Gastrocnemius medialis (tissue), 4 donors: ENCODE measurements at regions of chr1 and their contacts with region 1.

Region 1: GRCh38 chr1:182604169-182605164 is at the start of gene RGS16:
- DNase-seq: peak; percentile 86 to 90
- ATAC-seq: peak; percentile 85 to 86
- H3K4me3 ChIP-seq: peak within 1 kb of the TSS; percentile 52 to 68 (median 54)
- H3K27ac ChIP-seq: peak within 1 kb of the TSS; percentile 59 to 66 (median 63)
- H3K4me1 ChIP-seq: peaks cover 33 to 36% of the 10 kb centered on the region in 2 donors
- H3K27me3 ChIP-seq: no peaks in the 10 kb centered on the region
- CTCF ChIP-seq: no peak
- POLR2A ChIP-seq: peak; percentile 70 to 92
- total RNA-seq, gene RGS16: 0.41 to 0.98 (median 0.52) TPM in 3 of 4 donors, not detected in the other

Region 2: DNA sequence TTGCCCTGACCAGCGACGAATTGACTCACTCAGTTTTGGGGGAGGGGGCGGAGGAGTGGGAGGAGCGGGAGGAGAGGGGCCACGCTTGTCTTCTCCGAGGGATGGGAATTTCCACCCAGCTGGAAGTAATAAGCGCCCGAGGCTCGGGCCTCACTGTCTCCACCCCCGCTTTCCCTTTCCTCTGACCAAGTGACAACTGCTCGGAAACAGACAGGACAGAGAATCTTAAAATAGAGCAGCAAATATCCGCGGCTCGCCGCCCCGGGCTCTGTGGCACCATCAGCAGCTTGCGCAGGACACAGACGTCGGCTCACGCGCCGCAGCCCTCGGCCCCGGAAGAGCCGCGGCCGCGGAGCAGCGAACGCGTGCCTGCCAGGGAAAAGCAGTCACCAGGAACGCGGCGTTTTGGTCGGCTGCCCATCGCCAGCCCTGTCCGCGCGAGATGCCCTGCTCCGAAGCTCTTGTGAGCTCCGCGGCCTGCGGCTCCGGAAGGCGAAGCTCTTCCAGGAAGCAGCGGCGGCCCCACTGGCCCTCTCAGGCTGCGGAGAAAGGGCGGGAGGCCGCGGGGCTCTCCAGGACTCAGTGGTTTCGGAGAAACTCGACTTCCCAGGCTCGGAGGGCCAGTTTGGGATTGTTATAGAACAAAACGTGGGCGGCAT is 10.5 kb after region 1 on chr1:
- in situ Hi-C with region 1: no loop called
- intact Hi-C with region 1: loop called (anchors 1 kb)
- DNase-seq: peak; percentile 77 to 86
- ATAC-seq: peak; percentile 88
- H3K4me3 ChIP-seq: peak overlapping the region; percentile 58 to 63 (median 61)
- H3K27ac ChIP-seq: peak overlapping the region; percentile 86 to 95 (median 91)
- H3K4me1 ChIP-seq: peaks cover 16 to 21% of the 10 kb centered on the region in 2 donors
- H3K27me3 ChIP-seq: no peaks in the 10 kb centered on the region
- CTCF ChIP-seq: peak in 1 of 5 experiments; percentile 11
- POLR2A ChIP-seq: peak; percentile 89 to 91

Region 3: DNA sequence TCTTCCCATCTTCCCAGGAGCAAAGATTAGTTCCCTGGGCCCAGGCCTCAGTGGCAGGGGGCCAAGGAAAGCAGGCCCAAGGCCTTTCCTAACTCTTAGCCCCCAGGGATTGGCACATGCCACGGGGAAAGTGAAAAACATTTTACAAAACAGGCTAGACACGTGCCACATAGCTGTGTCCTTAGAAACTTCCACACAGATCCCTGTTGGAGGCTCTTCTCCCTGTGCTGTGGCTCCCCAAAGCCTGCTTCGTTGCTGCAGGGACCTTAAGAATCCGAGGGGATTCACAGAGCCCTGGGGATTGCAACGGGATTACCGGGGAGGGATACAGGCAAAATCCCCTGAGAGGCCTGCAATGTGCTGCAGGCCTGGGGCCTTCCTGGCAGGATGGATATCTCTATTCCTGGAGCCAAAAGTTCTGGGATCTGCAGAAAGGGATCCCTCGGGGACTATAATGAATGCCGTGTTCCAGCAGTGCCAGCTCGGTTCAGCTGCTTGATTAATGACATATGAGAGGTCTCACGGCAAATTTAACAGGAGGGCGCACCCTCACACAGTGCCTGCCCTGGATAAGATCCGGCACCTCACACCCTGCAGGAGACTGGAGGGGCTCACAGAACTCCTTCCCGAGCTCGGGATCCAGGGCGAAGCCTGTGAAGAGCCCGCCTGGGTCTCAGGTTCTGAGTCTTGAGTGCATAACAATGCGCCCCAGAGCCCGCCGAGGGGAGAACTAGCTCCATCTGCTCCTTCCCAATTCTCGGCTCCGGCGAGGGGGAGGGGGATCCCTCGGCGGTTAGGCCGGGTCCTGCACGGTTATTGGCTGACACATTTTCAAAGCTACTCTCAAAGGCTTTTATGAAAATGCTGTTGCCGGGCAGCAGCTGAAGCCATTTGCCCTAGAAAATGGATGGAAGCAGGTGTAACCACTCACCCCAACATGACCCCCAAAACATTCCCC is 95.2 kb after region 1 on chr1:
- in situ Hi-C with region 1: no loop called
- intact Hi-C with region 1: loop called (anchors 2 kb)
- DNase-seq: peak in 1 of 2 donors; percentile 43
- ATAC-seq: peak; percentile 36 to 50
- H3K4me3 ChIP-seq: peak overlapping the region in 3 of 4 donors; percentile 14 to 26 (median 20)
- H3K27ac ChIP-seq: no peak overlapping the region
- H3K4me1 ChIP-seq: peaks cover 4 to 8% of the 10 kb centered on the region in 2 donors
- H3K27me3 ChIP-seq: no peaks in the 10 kb centered on the region
- CTCF ChIP-seq: no peak
- POLR2A ChIP-seq: no peak

Region 4: DNA sequence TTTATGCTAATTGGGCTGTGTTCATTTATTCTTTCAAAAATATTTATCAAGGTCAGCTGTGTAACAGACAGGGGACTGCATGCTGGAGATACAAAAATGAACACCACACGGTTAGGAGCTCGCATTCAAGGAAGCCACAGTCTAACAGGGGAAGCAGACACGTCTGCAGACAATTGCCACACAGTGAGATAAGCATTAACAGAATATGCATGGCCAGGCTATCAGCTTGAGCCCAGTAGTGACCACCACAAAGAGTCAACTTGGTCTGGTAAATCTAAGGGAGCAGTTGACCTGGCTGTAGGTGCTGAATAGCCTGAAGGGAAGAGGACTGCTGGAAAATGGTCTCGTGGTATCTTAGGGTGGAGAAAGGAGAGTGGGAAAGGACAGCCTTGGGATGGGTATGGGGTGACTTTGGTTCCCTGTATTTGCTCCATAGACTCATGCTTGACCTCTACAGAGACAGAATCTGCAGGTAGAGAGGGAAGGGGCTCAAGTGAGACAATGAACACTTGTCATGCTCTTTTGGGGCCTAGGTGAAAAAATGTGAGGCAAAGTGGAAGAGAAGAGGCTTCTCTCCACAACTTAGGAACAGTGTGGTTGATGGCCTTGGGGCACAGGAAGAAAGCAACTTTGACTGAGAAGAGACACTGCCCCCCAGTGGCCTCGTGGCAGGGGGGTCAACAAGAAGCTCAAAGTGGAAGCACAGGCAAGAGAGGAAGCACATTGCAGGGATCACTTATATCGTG is 177.5 kb after region 1 on chr1:
- in situ Hi-C with region 1: loop called (anchors 5 kb)
- intact Hi-C with region 1: loop called (anchors 1 kb)
- DNase-seq: peak; percentile 40 to 62
- ATAC-seq: peak; percentile 61 to 75
- H3K4me3 ChIP-seq: no peak overlapping the region
- H3K27ac ChIP-seq: no peak overlapping the region
- H3K4me1 ChIP-seq: no peaks in the 10 kb centered on the region
- H3K27me3 ChIP-seq: no peaks in the 10 kb centered on the region
- CTCF ChIP-seq: peak; percentile 32 to 80 (median 71)
- POLR2A ChIP-seq: no peak

Region 5: GRCh38 chr1:182839209-182840065 is 235.0 kb after region 1 on chr1 and contains the start of gene DHX9:
- in situ Hi-C with region 1: no loop called
- intact Hi-C with region 1: loop called (anchors 5 kb)
- DNase-seq: peak; percentile 81 to 85
- ATAC-seq: peak; percentile 94 to 96
- H3K4me3 ChIP-seq: peak within 1 kb of the TSS; percentile 55 to 97 (median 87)
- H3K27ac ChIP-seq: peak within 1 kb of the TSS; percentile 84 to 98 (median 90)
- H3K4me1 ChIP-seq: peaks cover 29 to 41% of the 10 kb centered on the region in 2 donors
- H3K27me3 ChIP-seq: no peaks in the 10 kb centered on the region
- CTCF ChIP-seq: peak in 4 of 5 experiments; percentile 6 to 24 (median 19)
- POLR2A ChIP-seq: peak; percentile 79 to 87
- total RNA-seq, gene DHX9: 37.7 to 58.8 (median 48.4) TPM

Region 6: GRCh38 chr1:183635606-183636333 is 1031.3 kb after region 1 on chr1 and contains the start of gene ARPC5:
- in situ Hi-C with region 1: no loop called
- intact Hi-C with region 1: loop called (anchors 10 kb)
- DNase-seq: peak; percentile 90
- ATAC-seq: peak; percentile 90 to 97
- H3K4me3 ChIP-seq: peak within 1 kb of the TSS; percentile 79 to 92 (median 88)
- H3K27ac ChIP-seq: peak within 1 kb of the TSS; percentile 82 to 89 (median 84)
- H3K4me1 ChIP-seq: peaks cover 29 to 35% of the 10 kb centered on the region in 2 donors
- H3K27me3 ChIP-seq: no peaks in the 10 kb centered on the region
- CTCF ChIP-seq: no peak
- POLR2A ChIP-seq: peak; percentile 76 to 81
- total RNA-seq, gene ARPC5: 10.8 to 14.6 (median 13.0) TPM